Activated B cell treated with CpG ODN at 0.5 μM for 24 hours (primary cell): ENCODE measurements at regions of chr9 and their contacts with region 1.

Region 1: DNA sequence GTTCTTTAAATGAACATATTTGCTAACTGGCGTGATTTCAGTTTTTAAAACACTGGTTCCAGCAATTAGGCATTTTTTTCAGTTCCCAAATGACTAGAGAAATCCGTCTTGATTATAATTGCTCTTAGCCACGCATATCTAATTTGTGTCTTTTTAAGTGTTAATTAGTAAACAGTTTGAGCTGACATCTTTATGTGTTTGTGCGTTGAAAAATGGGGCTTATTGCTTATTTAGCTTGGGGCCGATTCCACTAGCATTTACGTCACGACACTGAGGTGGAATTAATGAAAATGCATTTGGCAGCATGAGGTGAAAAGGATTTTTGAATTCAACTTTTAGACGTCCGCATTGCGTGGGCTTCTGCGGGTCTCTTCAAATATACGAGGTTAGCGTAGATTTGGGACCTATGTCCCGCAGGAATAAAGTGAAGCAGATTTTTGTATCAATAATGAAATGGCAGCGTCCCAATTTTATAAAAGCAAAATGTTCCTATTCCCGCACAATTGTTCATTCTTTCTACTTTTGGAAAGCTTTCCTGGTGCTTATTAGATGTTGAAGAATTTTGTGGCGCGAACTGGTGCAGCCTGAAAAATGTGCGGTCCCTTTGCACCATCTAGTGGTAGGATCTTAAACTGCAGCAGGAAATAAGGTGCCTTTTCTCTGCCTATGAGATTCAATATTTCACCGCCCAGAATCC is 122.7 kb upstream of the LMX1B start:
- DNase-seq: no peak
- ATAC-seq: peak; percentile 71
- H3K4me3 Mint-ChIP-seq: no peak overlapping the region
- H3K27ac Mint-ChIP-seq: no peak overlapping the region
- H3K4me1 Mint-ChIP-seq: peaks cover 8% of the 10 kb centered on the region
- H3K27me3 Mint-ChIP-seq: peaks cover 6% of the 10 kb centered on the region
- CTCF ChIP-seq: peak; percentile 64

Region 2: GRCh38 chr9:125558453-125559092 is 932.4 kb before region 1 on chr9:
- CTCF ChIA-PET with region 1: interaction called, 14 read pairs
- POLR2A ChIA-PET with region 1: no interaction called
- intact Hi-C with region 1: loop called (anchors 2 kb)
- DNase-seq: no peak
- ATAC-seq: peak; percentile 83
- H3K4me3 Mint-ChIP-seq: no peak overlapping the region
- H3K27ac Mint-ChIP-seq: no peak overlapping the region
- H3K4me1 Mint-ChIP-seq: peaks cover 26% of the 10 kb centered on the region
- H3K27me3 Mint-ChIP-seq: no peaks in the 10 kb centered on the region
- CTCF ChIP-seq: no peak

Region 3: DNA sequence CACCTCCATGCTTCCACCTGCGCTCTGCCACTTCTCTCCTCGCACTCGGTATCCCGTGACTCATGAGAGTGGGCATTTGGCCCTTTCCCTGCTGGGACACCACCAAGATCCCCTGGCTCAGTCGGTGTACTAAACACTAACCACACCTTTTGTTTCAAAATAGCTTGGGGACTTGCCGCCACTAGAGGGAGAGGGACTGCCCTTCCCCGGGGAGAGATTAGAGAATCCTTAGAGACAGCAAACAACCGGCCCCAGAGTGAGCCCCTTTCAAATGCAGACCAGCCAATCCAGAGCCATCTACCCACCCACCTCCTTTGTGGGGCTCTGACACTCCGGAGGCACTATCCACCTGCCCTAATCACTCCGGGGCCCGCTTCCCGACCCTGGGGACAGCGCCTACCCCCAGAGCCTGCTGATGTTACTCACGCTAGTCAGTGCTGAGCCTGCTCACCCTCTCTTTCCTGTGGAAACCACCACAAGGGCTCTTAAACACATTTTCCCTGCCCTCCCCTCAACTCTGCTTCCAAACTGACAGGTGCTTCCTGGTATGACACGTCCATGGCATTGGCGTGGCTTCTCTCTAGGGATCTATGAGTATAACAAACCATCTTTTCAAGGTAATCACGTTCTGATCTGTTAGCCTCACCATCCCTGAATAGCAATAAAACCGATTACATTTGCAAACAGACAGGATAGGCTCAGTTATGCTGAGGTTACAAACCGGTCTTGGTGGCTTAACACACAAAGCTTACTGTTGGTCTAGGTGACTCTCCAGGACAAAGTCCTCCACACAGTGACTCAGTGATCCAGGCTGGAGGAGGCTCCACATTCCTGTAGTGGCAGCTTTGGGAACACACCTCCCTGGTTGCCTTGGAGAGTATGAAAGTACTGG is 344.5 kb before region 1 on chr9:
- CTCF ChIA-PET with region 1: interaction called, 5 read pairs
- POLR2A ChIA-PET with region 1: no interaction called
- intact Hi-C with region 1: loop called (anchors 1 kb)
- DNase-seq: peak; percentile 40
- ATAC-seq: peak; percentile 76
- H3K4me3 Mint-ChIP-seq: peak overlapping the region; percentile 70
- H3K27ac Mint-ChIP-seq: peak overlapping the region; percentile 62
- H3K4me1 Mint-ChIP-seq: peaks cover 23% of the 10 kb centered on the region
- H3K27me3 Mint-ChIP-seq: peaks cover 31% of the 10 kb centered on the region
- CTCF ChIP-seq: no peak

Region 4: DNA sequence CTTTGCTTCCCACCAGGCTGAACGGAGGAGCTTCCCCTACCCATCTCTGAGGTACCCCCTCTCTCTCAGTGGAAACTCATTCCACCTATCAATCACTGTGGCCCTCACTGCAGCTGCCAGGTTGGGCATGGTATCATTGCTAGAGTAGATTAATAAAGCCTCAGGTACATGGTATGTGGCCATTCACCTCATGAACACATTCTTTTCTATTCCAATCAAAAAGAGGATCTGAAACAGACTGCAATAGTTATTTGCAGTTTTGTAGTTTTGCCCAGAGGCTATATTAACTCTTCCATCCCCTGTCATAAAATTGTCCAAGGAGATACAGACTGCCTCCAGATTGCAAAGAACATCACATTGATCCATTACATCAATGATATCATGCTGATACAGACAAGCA is 250.2 kb before region 1 on chr9:
- CTCF ChIA-PET with region 1: no interaction called
- POLR2A ChIA-PET with region 1: no interaction called
- intact Hi-C with region 1: no loop called
- DNase-seq: no peak
- ATAC-seq: no peak
- H3K4me3 Mint-ChIP-seq: no peak overlapping the region
- H3K27ac Mint-ChIP-seq: no peak overlapping the region
- H3K4me1 Mint-ChIP-seq: peaks cover 8% of the 10 kb centered on the region
- H3K27me3 Mint-ChIP-seq: peaks cover 7% of the 10 kb centered on the region
- CTCF ChIP-seq: no peak

Region 5: GRCh38 chr9:126301985-126302603 is 188.9 kb before region 1 on chr9:
- CTCF ChIA-PET with region 1: interaction called, 48 read pairs
- POLR2A ChIA-PET with region 1: no interaction called
- intact Hi-C with region 1: loop called (anchors 1 kb)
- DNase-seq: no peak
- ATAC-seq: peak; percentile 69
- H3K4me3 Mint-ChIP-seq: no peak overlapping the region
- H3K27ac Mint-ChIP-seq: no peak overlapping the region
- H3K4me1 Mint-ChIP-seq: no peaks in the 10 kb centered on the region
- H3K27me3 Mint-ChIP-seq: peaks cover 2% of the 10 kb centered on the region
- CTCF ChIP-seq: no peak

Region 6: DNA sequence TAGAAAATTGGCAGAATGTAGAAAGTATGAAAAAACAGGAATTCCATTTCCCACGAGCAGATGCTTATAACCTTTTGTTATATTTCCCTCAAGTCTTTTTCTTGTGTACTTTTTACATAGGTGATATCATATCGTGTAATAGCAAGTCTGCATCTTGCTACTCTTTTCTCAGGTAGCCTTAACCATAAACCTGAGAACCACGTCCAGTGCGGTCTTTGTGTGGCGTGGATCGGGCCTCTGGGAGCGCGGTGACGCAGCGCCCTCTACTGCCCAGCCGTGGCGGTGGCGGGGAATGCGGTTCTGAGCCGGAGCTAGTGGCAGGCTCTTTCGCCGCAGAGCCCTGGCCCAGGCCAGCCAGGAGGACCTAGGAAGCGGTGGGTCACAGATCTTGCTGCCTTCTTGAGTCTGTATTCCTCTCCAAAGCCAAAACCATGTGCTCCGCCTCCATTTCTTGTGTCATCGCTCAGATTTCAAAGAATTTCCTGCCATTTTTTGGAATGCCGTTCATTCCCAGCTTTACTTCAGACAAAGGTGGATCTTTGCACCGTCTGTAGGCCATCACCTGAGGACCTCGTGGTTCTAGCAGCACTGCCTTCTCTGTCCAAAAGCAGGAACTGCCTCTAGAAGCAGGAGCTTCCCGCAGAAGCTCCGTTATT is 92.5 kb before region 1 on chr9:
- CTCF ChIA-PET with region 1: interaction called, 51 read pairs
- POLR2A ChIA-PET with region 1: no interaction called
- intact Hi-C with region 1: loop called (anchors 1 kb)
- DNase-seq: peak; percentile 75
- ATAC-seq: peak; percentile 33
- H3K4me3 Mint-ChIP-seq: no peak overlapping the region
- H3K27ac Mint-ChIP-seq: peak overlapping the region; percentile 7
- H3K4me1 Mint-ChIP-seq: peaks cover 28% of the 10 kb centered on the region
- H3K27me3 Mint-ChIP-seq: peaks cover 5% of the 10 kb centered on the region
- CTCF ChIP-seq: peak; percentile 66

Region 7: GRCh38 chr9:126471084-126471624 is 19.9 kb before region 1 on chr9:
- CTCF ChIA-PET with region 1: interaction called, 32 read pairs
- POLR2A ChIA-PET with region 1: interaction called, 5 read pairs
- intact Hi-C with region 1: loop called (anchors 2 kb)
- DNase-seq: peak; percentile 61
- ATAC-seq: peak; percentile 77
- H3K4me3 Mint-ChIP-seq: peak overlapping the region; percentile 75
- H3K27ac Mint-ChIP-seq: peak overlapping the region; percentile 92
- H3K4me1 Mint-ChIP-seq: peaks cover 57% of the 10 kb centered on the region
- H3K27me3 Mint-ChIP-seq: no peaks in the 10 kb centered on the region
- CTCF ChIP-seq: no peak